Activated naive CD4-positive, alpha-beta T cell treated with anti-CD3 and anti-CD28 coated beads for 36 hours (primary cell): ENCODE measurements at regions of chr13 and their contacts with region 1.

Region 1: DNA sequence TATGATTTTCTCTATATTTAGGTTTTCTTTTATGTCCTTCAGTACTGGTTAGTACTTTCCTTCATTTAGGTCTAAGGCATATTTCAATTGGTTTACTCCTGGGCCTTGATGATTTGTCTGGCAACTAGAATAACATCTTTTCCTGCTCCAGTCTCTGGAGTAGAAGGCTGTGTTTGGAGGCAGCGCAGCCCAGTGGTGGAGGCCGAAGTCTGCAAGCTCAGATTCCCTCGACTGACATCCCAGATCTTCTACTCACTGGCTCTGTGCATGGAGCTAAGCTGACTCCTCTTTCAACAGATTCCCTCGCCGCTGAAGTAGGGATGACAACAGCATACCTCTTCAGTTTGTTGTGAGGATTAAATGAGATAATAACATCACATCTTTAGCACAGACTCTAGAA is 141.0 kb downstream of the RAP2A start:
- DNase-seq: peak; percentile 51
- H3K4me3 Mint-ChIP-seq: no peak overlapping the region
- H3K27ac Mint-ChIP-seq: no peak overlapping the region
- H3K4me1 Mint-ChIP-seq: no peaks in the 10 kb centered on the region
- H3K27me3 Mint-ChIP-seq: peaks cover 6% of the 10 kb centered on the region

Region 2: GRCh38 chr13:97359181-97360057 is 215.5 kb before region 1 on chr13:
- CTCF ChIA-PET with region 1: no interaction called
- intact Hi-C with region 1: loop called (anchors 10 kb)
- DNase-seq: peak; percentile 60
- H3K4me3 Mint-ChIP-seq: no peak overlapping the region
- H3K27ac Mint-ChIP-seq: no peak overlapping the region
- H3K4me1 Mint-ChIP-seq: no peaks in the 10 kb centered on the region
- H3K27me3 Mint-ChIP-seq: no peaks in the 10 kb centered on the region